ENCODE measurements at regions of chr7 and their contacts with region 1.

Region 1: GRCh38 chr7:105820363-105821066 is 55.9 kb downstream of the ATXN7L1 start:
- DNase-seq: no peak
- ATAC-seq: no peak
- H3K4me3 ChIP-seq: no peak overlapping the region
- H3K27ac ChIP-seq: no peak overlapping the region
- H3K4me1 ChIP-seq: peaks cover 0 to 20% (median 7%) of the 10 kb centered on the region in 9 donors
- H3K27me3 ChIP-seq: no peaks in the 10 kb centered on the region
- CTCF ChIP-seq: no peak

Region 2: DNA sequence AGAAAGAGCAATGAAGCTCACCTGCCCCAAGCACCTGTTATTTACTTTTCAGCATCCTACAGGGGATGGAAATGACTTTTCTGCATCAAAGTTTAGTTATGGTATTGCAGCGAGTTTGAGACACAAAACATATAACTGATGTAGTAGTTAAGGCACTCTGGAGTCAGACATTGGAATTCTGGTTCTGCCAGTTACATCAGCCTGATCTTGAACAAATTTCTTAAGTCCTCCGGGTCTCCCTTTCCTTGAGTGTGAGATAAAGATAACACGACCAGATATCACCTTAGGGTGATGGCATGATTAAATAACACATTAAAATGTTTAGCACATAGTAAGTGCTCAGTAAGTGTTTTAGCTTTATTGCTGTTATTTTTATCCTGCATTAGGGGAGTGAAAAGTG is 41.5 kb before region 1 on chr7:
- intact Hi-C with region 1: loop called in 1 of 10 experiments (anchors 1 kb)
- DNase-seq: no peak
- ATAC-seq: no peak
- H3K4me3 ChIP-seq: no peak overlapping the region
- H3K27ac ChIP-seq: no peak overlapping the region
- H3K4me1 ChIP-seq: peaks cover 0 to 23% (median 4%) of the 10 kb centered on the region in 9 donors
- H3K27me3 ChIP-seq: no peaks in the 10 kb centered on the region
- CTCF ChIP-seq: no peak

Region 3: DNA sequence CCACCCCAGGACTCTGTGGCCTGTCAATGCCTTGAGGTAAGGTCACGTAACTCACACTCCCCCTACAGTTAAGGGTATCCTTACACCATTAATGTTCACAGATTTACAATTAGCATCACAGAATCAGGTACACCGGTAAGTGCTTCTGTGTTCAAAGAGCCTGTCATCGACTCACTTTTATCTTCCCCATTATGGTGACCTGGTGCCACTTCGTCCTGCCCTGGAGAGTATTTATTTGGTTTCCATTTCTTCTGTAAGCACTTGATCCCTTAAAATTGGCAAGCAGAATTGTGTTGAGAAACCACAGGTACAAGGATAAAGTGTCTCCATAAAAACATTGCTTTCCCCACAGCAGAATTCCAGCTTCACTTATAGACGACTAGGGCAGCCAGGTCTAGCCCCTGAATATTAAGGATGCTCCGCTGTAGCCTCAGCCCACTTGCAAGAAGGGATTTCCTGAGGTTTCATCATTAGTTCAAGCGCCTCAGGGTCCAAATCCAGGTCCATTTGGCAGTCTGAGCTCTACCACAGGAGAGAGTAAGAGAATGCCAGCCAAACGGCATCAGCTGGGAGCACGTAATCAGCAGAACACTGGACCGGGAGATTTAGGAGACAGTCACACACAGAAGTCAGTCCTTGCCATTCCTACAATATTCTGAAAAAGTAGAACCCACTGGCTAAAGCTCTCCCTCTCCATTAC is 45.7 kb after region 1 on chr7:
- intact Hi-C with region 1: no loop called
- DNase-seq: no peak
- ATAC-seq: no peak
- H3K4me3 ChIP-seq: no peak overlapping the region
- H3K27ac ChIP-seq: no peak overlapping the region
- H3K4me1 ChIP-seq: no peaks in the 10 kb centered on the region
- H3K27me3 ChIP-seq: no peaks in the 10 kb centered on the region
- CTCF ChIP-seq: no peak